MCF 10A (cell line): ENCODE measurements at regions of chr11 and their contacts with region 1.

Region 1: DNA sequence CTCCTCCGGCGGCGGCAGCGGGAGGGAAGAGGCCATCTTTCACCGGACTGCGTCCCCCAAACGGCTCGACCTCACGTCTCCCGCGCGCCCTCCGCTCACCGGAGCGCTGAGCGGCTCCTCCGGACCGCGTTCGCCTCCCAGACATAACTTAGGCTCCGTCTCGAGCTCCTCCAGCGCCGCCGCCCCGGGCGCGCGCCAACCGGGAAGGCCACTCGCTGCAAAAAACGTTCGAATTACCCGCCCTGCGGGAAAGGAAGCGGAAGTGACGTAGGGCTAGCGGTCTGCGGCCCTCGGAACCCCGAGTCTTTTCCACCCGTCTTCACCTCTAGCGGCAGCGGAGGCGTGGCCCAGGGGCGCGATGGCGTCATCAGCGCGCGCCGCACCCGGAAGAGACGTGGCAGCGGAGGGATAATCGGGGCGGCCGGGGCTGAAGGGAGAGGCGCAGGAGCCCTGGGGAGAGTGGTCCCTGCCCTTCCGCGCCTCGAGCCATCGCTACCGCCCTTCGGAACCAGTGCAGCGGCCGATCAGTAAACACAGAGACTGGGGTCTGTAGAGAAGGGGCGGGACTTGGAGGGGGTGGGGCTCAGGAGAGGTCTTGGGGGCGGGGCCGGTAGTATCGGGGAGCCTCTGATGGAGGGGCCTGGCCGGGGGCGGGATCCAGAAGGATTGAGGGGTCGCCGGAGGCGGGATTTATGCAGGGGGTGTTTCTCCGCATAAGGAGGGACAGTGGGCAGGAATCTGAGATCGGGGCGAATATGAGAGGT is at the starts of genes CDCA5 and ZFPL1:
- DNase-seq: peak; percentile 94
- H3K4me3 Mint-ChIP-seq: peak within 1 kb of the TSS; percentile 99
- H3K27ac Mint-ChIP-seq: peak within 1 kb of the TSS; percentile 99
- H3K4me1 Mint-ChIP-seq: peaks cover 25% of the 10 kb centered on the region
- H3K27me3 Mint-ChIP-seq: no peaks in the 10 kb centered on the region
- CTCF ChIP-seq: no peak
- total RNA-seq, gene CDCA5: 9.5 and 17.3 TPM in 2 replicates
- total RNA-seq, gene ZFPL1: 50.8 and 52.3 TPM in 2 replicates

Region 2: DNA sequence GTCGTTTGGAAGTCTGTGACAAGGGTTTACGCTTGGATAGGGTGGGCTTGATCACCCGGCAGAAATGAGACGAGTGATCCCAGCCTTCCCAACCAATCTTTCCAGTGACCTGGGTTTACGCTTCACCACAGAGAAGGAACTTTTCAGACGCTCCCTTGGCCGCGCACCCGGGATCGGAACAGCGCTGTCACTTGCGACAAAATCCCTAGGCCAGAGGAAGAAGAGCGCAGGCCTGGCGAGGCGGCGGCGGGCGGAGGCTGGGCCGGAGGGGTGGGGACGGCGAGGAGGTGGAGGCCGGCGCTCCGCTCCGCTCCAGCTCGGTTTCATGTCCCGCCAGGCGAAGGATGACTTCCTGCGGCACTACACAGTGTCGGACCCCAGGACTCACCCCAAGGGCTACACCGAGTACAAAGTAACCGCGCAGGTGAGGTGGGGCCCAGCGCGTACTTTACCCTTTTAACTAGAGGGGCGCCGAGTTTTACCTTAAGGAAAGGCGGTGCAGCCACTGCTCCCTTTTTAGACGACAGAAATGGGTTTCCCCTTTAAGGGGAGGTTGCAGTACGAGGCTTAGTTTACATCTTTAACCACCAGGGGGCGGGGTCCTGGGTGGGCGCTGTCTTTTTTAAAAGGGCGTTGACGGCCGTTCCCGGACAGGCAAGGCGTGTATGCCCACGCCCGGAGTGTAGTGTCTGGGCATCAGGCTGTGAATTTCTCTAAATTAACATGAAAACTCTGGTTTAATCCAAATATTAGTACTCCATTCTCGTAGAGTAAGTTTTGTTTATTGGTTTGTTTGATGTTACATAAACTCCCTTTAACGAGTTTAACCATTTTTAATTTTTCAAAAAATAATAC is 56.6 kb before region 1 on chr11 and contains the start of gene SNX15:
- CTCF ChIA-PET with region 1: no interaction called
- POLR2A ChIA-PET with region 1: interaction called, 4 read pairs
- intact Hi-C with region 1: loop called (anchors 5 kb)
- DNase-seq: peak; percentile 97
- H3K4me3 Mint-ChIP-seq: peak within 1 kb of the TSS; percentile 75
- H3K27ac Mint-ChIP-seq: peak within 1 kb of the TSS; percentile 30
- H3K4me1 Mint-ChIP-seq: peaks cover 7% of the 10 kb centered on the region
- H3K27me3 Mint-ChIP-seq: no peaks in the 10 kb centered on the region
- CTCF ChIP-seq: peak; percentile 71
- total RNA-seq, gene SNX15: 18.0 and 21.0 TPM in 2 replicates

Region 3: DNA sequence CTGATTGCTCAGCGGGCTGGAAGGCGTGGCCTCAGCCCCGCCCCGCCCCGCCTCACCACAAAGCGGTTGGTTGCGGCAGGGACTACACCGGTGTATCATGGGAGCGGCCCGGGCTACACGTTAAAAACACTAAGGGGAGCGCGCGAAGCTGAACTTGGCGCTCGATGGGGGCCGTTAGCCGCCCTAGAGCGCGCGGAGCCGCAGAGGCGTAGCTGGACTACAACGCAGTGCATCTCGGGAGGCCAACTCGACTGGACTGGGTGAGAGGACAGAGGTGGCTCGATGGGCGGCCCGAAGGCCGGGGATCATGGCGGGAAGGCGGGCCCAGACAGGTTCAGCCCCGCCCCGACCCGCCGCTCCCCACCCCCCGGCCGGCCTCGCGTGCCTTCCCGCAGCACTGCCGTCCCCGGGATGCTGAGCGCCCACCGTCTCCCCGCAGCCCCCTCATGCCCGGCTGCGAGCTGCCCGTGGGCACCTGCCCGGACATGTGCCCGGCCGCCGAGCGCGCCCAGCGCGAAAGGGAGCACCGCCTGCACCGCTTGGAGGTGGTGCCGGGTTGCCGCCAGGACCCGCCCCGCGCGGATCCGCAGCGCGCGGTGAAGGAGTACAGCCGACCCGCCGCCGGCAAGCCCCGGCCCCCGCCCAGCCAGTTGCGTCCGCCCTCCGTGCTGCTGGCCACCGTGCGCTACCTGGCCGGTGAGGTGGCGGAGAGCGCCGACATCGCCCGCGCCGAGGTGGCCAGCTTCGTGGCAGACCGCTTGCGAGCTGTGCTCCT is 43.0 kb before region 1 on chr11 and contains the start of gene SAC3D1:
- CTCF ChIA-PET with region 1: interaction called, 10 read pairs
- POLR2A ChIA-PET with region 1: interaction called, 7 read pairs
- intact Hi-C with region 1: loop called (anchors 5 kb)
- DNase-seq: peak; percentile 93
- H3K4me3 Mint-ChIP-seq: peak within 1 kb of the TSS; percentile 89
- H3K27ac Mint-ChIP-seq: peak within 1 kb of the TSS; percentile 84
- H3K4me1 Mint-ChIP-seq: peaks cover 10% of the 10 kb centered on the region
- H3K27me3 Mint-ChIP-seq: no peaks in the 10 kb centered on the region
- CTCF ChIP-seq: no peak
- total RNA-seq, gene SAC3D1: 10.3 and 14.0 TPM in 2 replicates

Region 4: DNA sequence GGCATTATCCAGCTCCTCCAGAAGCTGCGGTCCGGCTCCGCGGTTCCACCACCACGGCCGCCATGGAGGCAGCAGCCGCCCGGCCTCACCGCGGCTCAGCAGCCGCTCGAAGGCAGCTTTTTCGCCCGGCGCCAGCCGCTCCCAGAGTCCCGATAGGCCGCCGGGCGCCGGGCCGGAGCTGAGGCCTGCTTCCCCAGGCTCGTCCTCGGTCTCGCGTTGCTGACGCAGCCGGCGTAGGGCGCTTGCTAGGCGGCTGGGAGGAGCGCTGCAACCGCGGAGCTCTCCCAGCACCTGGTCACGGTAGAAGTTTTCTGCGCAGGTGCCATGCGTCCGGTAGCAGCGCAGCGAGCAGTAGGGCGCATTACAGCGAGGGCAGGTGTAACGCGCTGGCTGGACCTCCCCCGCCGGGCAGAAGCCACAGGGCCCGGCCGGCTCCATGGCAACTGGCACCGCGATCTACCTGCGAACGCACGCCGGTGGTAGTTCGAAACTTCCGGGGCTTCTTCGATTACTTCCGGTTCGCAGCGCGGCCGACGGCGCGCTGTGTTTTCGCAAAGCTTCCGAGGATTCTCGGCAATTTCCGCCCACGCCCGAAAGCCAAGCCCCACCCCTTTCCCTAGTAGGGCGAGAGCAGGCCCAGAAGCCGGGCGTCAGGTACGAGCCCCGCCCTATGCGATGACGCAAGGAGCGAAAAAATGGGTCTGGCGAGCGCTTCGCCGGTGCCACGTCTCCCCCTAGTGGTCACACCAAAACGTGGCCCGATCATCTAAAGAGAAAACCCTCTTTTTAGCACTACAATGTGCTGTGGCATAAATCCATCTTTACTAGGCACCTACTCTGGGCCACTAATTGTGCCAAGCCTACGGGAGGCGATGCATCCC is 33.4 kb after region 1 on chr11 and contains the start of gene ZNHIT2:
- CTCF ChIA-PET with region 1: interaction called, 3 read pairs
- POLR2A ChIA-PET with region 1: interaction called, 11 read pairs
- intact Hi-C with region 1: no loop called
- DNase-seq: peak; percentile 99
- H3K4me3 Mint-ChIP-seq: peak within 1 kb of the TSS; percentile 82
- H3K27ac Mint-ChIP-seq: peak within 1 kb of the TSS; percentile 88
- H3K4me1 Mint-ChIP-seq: peaks cover 16% of the 10 kb centered on the region
- H3K27me3 Mint-ChIP-seq: no peaks in the 10 kb centered on the region
- CTCF ChIP-seq: peak; percentile 84
- total RNA-seq, gene ZNHIT2: 22.0 and 23.6 TPM in 2 replicates

Region 5: GRCh38 chr11:65540297-65541092 is 456.5 kb after region 1 on chr11:
- CTCF ChIA-PET with region 1: no interaction called
- POLR2A ChIA-PET with region 1: no interaction called
- intact Hi-C with region 1: no loop called
- DNase-seq: peak; percentile 87
- H3K4me3 Mint-ChIP-seq: peak overlapping the region; percentile 79
- H3K27ac Mint-ChIP-seq: peak overlapping the region; percentile 23
- H3K4me1 Mint-ChIP-seq: peaks cover 6% of the 10 kb centered on the region
- H3K27me3 Mint-ChIP-seq: no peaks in the 10 kb centered on the region
- CTCF ChIP-seq: peak; percentile 92